ENCODE measurements at regions of chr17 and their contacts with region 1.

Region 1: GRCh38 chr17:7627250-7628121 is at the start of gene SAT2:
- DNase-seq: peak; percentile 85 to 97 (median 95)
- H3K4me3 ChIP-seq: peak within 1 kb of the TSS; percentile 62 to 94 (median 84)
- H3K27ac ChIP-seq: peak within 1 kb of the TSS; percentile 65 to 98 (median 92)
- H3K27me3 ChIP-seq: no peaks in the 10 kb centered on the region
- CTCF ChIP-seq: peak in 15 of 56 donors; percentile 10 to 48 (median 20)
- total RNA-seq, gene SAT2: 72.5 to 143 (median 99.8) TPM

Region 2: GRCh38 chr17:7523033-7523432 is 104.5 kb before region 1 on chr17:
- intact Hi-C with region 1: no loop called
- DNase-seq: no peak
- H3K4me3 ChIP-seq: no peak overlapping the region
- H3K27ac ChIP-seq: no peak overlapping the region
- H3K27me3 ChIP-seq: no peaks in the 10 kb centered on the region
- CTCF ChIP-seq: peak in 37 of 56 donors; percentile 9 to 50 (median 30)

Region 3: GRCh38 chr17:7561589-7562207 is 65.8 kb before region 1 on chr17 and contains the start of gene SENP3:
- intact Hi-C with region 1: no loop called
- DNase-seq: peak; percentile 75 to 94 (median 84)
- H3K4me3 ChIP-seq: peak within 1 kb of the TSS; percentile 63 to 100 (median 96)
- H3K27ac ChIP-seq: peak within 1 kb of the TSS; percentile 72 to 98 (median 94)
- H3K27me3 ChIP-seq: no peaks in the 10 kb centered on the region
- CTCF ChIP-seq: peak in 6 of 56 donors; percentile 2 to 40 (median 26)
- total RNA-seq, gene SENP3: 41.4 to 93.2 (median 61.6) TPM

Region 4: DNA sequence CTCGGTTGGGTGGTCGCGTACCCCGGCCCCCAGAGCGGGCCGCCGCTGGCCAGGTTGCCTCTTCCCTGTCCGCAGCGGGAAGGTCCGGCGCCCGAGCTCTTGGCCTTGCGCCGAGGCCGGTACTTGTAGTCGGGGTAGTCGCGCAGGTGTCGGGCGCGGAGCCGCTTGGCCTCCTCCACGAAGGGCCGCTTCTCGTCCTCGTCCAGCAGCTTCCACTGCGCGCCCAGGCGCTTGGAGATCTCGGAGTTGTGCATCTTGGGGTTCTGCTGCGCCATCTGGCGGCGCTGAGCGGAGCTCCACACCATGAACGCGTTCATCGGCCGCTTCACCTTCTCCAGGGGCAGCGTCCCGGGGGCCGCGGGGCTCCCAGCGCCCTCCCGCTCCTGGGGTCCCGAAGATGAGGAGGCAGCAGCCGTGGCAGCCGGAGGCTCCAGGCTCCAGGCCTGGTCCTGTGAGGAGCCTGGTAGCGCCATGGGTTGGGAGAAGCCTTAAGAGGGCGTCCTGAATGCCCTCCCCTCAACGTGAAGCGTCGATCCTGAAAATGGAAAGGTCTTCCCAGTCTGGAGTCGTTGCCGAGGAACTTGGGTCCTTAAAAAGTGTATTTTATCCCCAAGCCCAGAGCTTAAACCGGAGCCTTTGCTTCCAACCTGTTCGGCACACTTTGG is 38.1 kb before region 1 on chr17:
- intact Hi-C with region 1: loop called in 1 of 2 experiments (anchors 5 kb)
- DNase-seq: peak; percentile 83 to 92 (median 90)
- H3K4me3 ChIP-seq: peak overlapping the region; percentile 52 to 89 (median 78)
- H3K27ac ChIP-seq: peak overlapping the region; percentile 12 to 94 (median 87)
- H3K27me3 ChIP-seq: no peaks in the 10 kb centered on the region
- CTCF ChIP-seq: peak; percentile 75 to 97 (median 93)

Region 5: DNA sequence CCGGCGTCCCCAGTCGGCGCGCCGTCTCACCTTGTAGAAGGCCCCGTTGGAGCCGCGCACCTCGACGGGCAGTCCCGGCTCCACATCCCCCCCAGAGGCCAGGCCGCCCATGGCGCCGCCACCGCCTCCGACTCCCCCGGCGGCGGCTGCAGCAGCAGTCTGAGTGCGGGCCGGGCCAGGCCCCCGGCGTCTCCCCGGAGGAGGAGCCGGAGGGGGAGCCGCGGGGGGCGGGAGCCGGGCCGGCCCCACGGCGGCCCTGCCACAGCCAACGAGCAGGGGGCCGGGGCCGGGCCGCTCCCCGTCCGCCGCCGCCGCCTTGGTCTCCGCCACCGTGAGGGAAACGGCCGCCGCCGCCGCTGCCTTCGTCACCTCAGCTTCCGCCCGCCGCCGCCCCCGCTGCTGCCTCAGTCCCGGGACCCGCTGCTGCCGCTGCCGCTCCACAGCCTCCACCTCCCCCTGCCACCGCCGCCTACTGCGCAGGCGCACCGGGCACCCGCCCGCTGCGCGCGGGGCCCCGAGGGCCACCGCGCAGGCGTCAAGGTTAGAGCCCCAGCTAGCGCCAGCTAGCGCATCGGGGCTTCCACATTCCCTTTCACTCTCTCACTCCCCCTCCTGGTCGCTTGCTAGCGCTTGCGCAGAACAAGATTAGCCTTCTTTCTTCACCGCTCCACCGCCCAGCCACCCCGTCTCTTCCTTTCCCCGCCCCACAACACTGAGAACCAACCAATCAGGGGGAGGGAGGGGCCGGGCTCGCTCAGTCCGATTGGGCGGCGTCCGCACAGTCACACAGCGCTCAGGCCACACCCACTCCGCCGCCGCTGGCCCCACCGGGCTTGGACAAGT is 12.8 kb before region 1 on chr17 and contains the start of gene FXR2:
- intact Hi-C with region 1: loop called in 1 of 2 experiments (anchors 1 kb)
- DNase-seq: peak; percentile 99 to 100 (median 100)
- H3K4me3 ChIP-seq: peak within 1 kb of the TSS; percentile 70 to 97 (median 91)
- H3K27ac ChIP-seq: peak within 1 kb of the TSS; percentile 60 to 98 (median 93)
- H3K27me3 ChIP-seq: no peaks in the 10 kb centered on the region
- CTCF ChIP-seq: peak in 55 of 56 donors; percentile 31 to 86 (median 64)
- total RNA-seq, gene FXR2: 53.1 to 114 (median 73.7) TPM

Region 6: DNA sequence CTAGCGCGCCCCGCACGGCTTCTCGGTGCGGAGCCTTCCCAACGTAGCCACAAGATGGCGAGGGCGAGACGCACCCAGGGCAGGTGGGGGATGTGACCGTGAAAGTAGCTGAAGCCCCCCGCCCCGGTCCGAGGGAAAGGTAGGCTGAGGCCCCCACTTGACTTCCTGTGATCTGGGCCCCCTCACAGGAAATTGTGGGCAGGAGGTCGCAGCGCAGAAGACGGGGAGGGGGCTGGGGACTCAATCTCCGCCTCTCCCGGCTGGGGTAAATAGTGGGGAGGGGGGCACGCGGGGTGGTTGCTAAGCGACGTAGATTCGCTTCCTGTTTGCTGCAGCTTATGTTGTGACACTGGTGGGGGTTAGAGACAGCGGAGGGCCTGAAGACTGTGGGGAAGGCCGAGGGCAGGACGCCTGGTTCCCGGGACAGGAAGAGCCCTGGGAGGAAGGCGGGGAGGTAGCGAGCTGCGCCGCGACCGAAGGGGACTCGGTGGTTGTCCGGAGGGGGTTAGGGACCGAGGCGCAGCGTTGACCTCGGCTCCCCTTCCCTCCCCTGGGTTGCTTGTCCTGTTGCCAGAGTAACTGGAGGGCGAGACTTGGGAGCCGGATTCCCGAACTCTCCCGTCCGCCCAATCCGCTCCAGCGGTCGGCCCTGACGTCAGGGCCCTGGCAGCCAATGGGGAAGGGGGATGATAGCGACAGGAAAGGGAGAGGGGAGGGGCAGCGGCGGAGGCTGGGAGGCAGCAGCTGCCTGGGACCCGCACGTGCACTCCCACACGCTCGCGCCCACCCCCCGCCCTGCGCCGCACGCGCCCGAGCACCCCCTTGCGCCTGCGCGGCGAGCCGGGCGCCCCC is 207.7 kb after region 1 on chr17:
- intact Hi-C with region 1: loop called in 1 of 2 experiments (anchors 10 kb)
- DNase-seq: peak; percentile 92 to 98 (median 96)
- H3K4me3 ChIP-seq: peak overlapping the region; percentile 54 to 100 (median 86)
- H3K27ac ChIP-seq: peak overlapping the region; percentile 55 to 99 (median 95)
- H3K27me3 ChIP-seq: no peaks in the 10 kb centered on the region
- CTCF ChIP-seq: peak; percentile 28 to 89 (median 76)

Measured in dorsolateral prefrontal cortex (tissue), 120 donors.